IMR-90 (cell line): ENCODE measurements at regions of chr3 and their contacts with region 1.

Region 1: DNA sequence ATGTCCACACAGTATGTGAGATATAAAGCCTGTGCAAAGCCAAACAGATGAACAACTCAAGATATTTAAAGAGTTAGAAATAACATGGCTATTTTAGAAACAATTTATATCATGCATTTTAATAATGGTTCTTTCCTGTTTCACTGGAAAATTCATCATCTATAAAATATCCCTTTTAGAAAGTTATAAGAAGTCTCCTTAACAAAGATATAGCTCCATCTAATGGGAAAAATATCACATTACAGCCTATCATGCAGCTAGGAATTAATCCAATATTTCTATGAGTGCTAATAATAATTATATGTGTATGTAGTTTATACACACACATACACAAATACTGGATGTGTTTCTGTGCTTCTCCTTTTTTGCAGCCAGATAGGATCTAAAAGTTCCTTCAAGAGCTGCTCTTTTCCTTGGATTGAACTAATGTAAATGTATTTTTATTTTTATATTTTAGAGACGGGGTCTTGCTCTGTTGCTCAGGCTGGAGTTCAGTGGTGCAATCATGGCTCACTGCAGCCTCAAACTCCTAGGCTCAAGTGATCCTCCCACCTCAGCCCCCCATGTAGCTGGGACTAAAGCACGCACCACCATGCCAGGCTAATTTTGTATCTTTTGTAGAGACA is 21.6 kb downstream of the RPL22L1 start:
- DNase-seq: peak; percentile 52
- ATAC-seq: peak; percentile 67; the same call in 1 of the 2 replicates
- H3K4me3 ChIP-seq: no peak overlapping the region
- H3K27ac ChIP-seq: no peak overlapping the region
- H3K4me1 ChIP-seq: no peaks in the 10 kb centered on the region
- H3K27me3 ChIP-seq: no peaks in the 10 kb centered on the region; the same call in 1 of the 2 replicates
- CTCF ChIP-seq: peak; percentile 65
- POLR2A ChIP-seq: no peak
- RAD21 ChIP-seq: peak; percentile 63

Region 2: DNA sequence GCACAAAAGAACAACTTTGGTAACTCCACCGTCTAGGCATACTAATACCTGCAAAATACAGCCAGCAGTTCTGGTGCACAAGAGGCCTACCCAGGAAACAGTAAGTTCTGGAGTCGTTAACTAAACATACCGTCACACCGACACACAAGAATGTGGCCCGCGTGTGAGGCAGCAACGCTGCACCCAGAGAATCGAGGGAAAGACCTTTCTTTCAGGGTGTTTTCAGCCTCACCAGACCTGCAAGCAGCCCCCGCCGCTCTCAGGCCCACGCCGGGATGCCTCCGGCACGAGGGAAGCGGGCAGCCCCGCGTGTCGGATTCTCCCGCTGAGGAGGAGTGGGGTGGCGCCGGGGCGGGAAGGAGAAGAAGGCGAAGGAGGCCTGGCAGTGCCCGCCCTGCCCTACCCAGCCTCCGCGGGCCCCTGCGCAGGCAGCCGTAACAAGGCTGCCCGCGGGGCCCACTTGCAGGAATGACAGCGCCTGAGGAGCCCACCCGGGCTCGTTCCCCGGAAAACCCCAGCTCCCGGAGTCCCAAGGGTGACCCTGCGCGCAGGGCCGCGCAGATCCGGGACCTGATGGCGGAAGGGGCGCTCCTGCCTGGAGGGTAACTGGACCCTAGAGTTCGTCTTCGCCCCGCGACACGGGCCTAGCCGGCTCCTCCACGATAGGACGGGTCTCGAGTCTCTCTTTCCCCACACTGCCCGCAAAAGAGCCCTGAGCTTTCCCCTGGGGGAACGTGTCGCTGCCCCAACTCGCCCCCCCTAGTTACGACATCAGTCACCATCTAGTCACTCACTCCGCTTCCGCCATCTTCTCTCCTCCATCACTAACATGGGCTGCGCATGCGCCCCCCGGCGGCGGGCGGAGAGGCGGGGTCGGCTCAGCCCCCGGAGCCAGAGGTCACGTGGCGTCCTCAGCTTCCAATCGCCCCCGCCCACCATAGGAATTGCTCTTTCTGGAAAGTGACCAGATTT is 667.2 kb before region 1 on chr3 and contains the start of gene PHC3:
- CTCF ChIA-PET with region 1: no interaction called
- POLR2A ChIA-PET with region 1: no interaction called
- dilution Hi-C with region 1: no loop called
- in situ Hi-C with region 1: loop called (anchors 10 kb)
- intact Hi-C with region 1: loop called (anchors 10 kb)
- DNase-seq: peak; percentile 85
- ATAC-seq: peak; percentile 84
- H3K4me3 ChIP-seq: peak within 1 kb of the TSS; percentile 92
- H3K27ac ChIP-seq: peak within 1 kb of the TSS; percentile 99
- H3K4me1 ChIP-seq: peaks cover 2% of the 10 kb centered on the region; the same call in 1 of the 2 replicates
- H3K27me3 ChIP-seq: no peaks in the 10 kb centered on the region
- CTCF ChIP-seq: no peak
- POLR2A ChIP-seq: peak; percentile 74; the same call in 1 of the 2 replicates
- RAD21 ChIP-seq: no peak
- total RNA-seq, gene PHC3: 17.5 and 26.3 TPM in 2 replicates

Region 3: GRCh38 chr3:170405101-170405500 is 443.3 kb before region 1 on chr3:
- CTCF ChIA-PET with region 1: interaction called, 5 read pairs
- POLR2A ChIA-PET with region 1: no interaction called
- dilution Hi-C with region 1: loop called (anchors 10 kb)
- in situ Hi-C with region 1: no loop called
- intact Hi-C with region 1: no loop called
- DNase-seq: no peak
- ATAC-seq: no peak
- H3K4me3 ChIP-seq: no peak overlapping the region
- H3K27ac ChIP-seq: no peak overlapping the region
- H3K4me1 ChIP-seq: no peaks in the 10 kb centered on the region
- H3K27me3 ChIP-seq: no peaks in the 10 kb centered on the region
- CTCF ChIP-seq: no peak
- POLR2A ChIP-seq: no peak
- RAD21 ChIP-seq: no peak